Activated T-helper 1 cell treated with anti-CD3 and anti-CD28 coated beads, Interleukin-12 subunit alpha, Interleukin-12 subunit beta, Interleukin-2, Interleukin-4 antibody, amounts not matched to agents 30 ng/mL and 10 ng/mL and 1 ng/mL, durations not matched to agents 14 hours and 24 hours and 36 hours (primary cell): ENCODE measurements at regions of chr4 and their contacts with region 1.

Region 1: GRCh38 chr4:109815151-109816081 is at the start of gene GAR1:
- DNase-seq: peak; percentile 88
- H3K4me3 Mint-ChIP-seq: peak within 1 kb of the TSS; percentile 98
- H3K27ac Mint-ChIP-seq: peak within 1 kb of the TSS; percentile 96
- H3K4me1 Mint-ChIP-seq: peaks cover 52% of the 10 kb centered on the region
- H3K27me3 Mint-ChIP-seq: no peaks in the 10 kb centered on the region
- total RNA-seq, gene GAR1: 53.2 and 61.3 TPM in 2 replicates

Region 2: GRCh38 chr4:108620101-108620932 is 1195.1 kb before region 1 on chr4 and contains the start of gene RPL34:
- intact Hi-C with region 1: loop called (anchors 1 kb)
- DNase-seq: peak; percentile 96
- H3K4me3 Mint-ChIP-seq: peak within 1 kb of the TSS; percentile 98
- H3K27ac Mint-ChIP-seq: peak within 1 kb of the TSS; percentile 97
- H3K4me1 Mint-ChIP-seq: peaks cover 43% of the 10 kb centered on the region
- H3K27me3 Mint-ChIP-seq: no peaks in the 10 kb centered on the region
- total RNA-seq, gene RPL34: 1,258 and 1,304 TPM in 2 replicates

Region 3: DNA sequence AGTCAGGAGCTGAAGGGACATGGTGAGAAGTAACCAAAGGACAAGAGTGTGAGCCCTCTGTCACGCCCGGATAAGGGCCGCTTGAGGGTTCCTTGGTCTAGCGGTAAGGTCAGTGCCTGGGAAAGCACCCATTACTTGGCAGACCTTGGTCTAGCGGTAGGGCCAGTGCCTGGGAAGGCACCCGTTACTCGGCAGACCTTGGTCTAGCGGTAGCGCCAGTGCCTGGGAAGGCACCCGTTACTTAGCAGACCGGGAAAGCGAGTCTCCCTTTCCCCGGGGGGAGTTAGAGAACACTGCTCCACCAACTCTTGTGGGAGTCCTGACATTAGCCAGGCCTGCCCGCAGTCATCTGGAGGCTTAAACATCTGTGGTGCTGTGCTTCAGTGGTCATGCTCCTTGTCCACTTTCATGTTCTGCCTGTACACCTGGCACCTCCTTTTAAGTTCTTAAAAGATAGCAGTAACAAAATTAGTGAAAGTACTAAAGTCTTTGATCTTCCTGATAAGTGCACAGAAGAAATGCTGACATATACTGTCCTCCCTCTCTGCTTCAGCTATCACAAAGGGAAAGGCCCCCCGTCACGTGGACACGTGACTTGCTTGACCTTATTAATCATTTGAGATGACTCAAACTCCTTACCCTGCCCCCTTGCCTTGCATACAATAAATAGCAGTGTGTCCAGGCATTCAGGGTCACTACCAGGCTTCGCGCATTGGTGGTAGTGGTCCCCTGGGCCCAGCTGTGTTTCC is 391.1 kb before region 1 on chr4:
- intact Hi-C with region 1: loop called (anchors 2 kb)
- DNase-seq: no peak
- H3K4me3 Mint-ChIP-seq: no peak overlapping the region
- H3K27ac Mint-ChIP-seq: no peak overlapping the region
- H3K4me1 Mint-ChIP-seq: peaks cover 9% of the 10 kb centered on the region
- H3K27me3 Mint-ChIP-seq: peaks cover 9% of the 10 kb centered on the region

Region 4: GRCh38 chr4:109648266-109648996 is 167.0 kb before region 1 on chr4:
- intact Hi-C with region 1: loop called (anchors 2 kb)
- DNase-seq: no peak
- H3K4me3 Mint-ChIP-seq: peak overlapping the region; percentile 69
- H3K27ac Mint-ChIP-seq: peak overlapping the region; percentile 84
- H3K4me1 Mint-ChIP-seq: peaks cover 8% of the 10 kb centered on the region
- H3K27me3 Mint-ChIP-seq: no peaks in the 10 kb centered on the region

Region 5: GRCh38 chr4:109754093-109754857 is 61.1 kb before region 1 on chr4:
- intact Hi-C with region 1: loop called (anchors 5 kb)
- DNase-seq: no peak
- H3K4me3 Mint-ChIP-seq: no peak overlapping the region
- H3K27ac Mint-ChIP-seq: no peak overlapping the region
- H3K4me1 Mint-ChIP-seq: no peaks in the 10 kb centered on the region
- H3K27me3 Mint-ChIP-seq: peaks cover 6% of the 10 kb centered on the region

Region 6: DNA sequence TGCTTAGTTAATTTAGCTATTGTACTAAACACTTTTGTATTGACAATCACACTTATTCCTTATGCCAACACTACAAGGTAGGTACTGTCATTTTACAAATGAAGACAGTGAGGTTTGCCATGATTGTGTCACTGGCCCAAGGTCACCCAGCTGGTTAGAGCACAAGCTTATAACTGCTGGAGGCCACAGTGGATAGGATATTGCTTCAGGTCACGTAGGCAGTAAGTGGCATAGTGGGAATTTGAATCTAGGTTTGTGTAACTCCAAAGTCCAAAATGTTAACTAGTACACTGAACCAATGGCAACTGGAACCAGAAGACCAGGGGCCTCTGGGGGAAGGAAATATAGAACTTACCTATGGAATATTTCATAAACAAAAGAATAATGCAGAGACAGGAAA is 828.6 kb after region 1 on chr4:
- intact Hi-C with region 1: no loop called
- DNase-seq: no peak
- H3K4me3 Mint-ChIP-seq: no peak overlapping the region
- H3K27ac Mint-ChIP-seq: no peak overlapping the region
- H3K4me1 Mint-ChIP-seq: no peaks in the 10 kb centered on the region
- H3K27me3 Mint-ChIP-seq: peaks cover 56% of the 10 kb centered on the region